Dendritic cell treated with granulocyte-macrophage colony-stimulating factor and Interleukin-4, amounts not matched to agents 40 ng/mL and 50 ng/mL, for 4 days (primary cell): ENCODE measurements at regions of chr15 and their contacts with region 1.

Region 1: GRCh38 chr15:63759752-63760151 is 74.0 kb downstream of the HERC1 start:
- H3K4me3 Mint-ChIP-seq: no peak overlapping the region
- H3K27ac Mint-ChIP-seq: no peak overlapping the region
- H3K4me1 Mint-ChIP-seq: peaks cover 24% of the 10 kb centered on the region
- H3K27me3 Mint-ChIP-seq: no peaks in the 10 kb centered on the region

Region 2: GRCh38 chr15:63805993-63806980 is 46.5 kb after region 1 on chr15:
- intact Hi-C with region 1: loop called (anchors 5 kb)
- H3K4me3 Mint-ChIP-seq: no peak overlapping the region
- H3K27ac Mint-ChIP-seq: peak overlapping the region; percentile 14
- H3K4me1 Mint-ChIP-seq: peaks cover 52% of the 10 kb centered on the region
- H3K27me3 Mint-ChIP-seq: no peaks in the 10 kb centered on the region